ENCODE measurements at regions of chr7 and their contacts with region 1.

Region 1: GRCh38 chr7:28020302-28020940 is 160.2 kb downstream of the JAZF1 start:
- DNase-seq: peak; percentile 53
- ATAC-seq: peak; percentile 80
- H3K4me3 Mint-ChIP-seq: no peak overlapping the region
- H3K27ac Mint-ChIP-seq: no peak overlapping the region
- H3K4me1 Mint-ChIP-seq: no peaks in the 10 kb centered on the region
- H3K27me3 Mint-ChIP-seq: no peaks in the 10 kb centered on the region

Region 2: GRCh38 chr7:27921081-27921836 is 99.2 kb before region 1 on chr7:
- CTCF ChIA-PET with region 1: interaction called, 18 read pairs
- POLR2A ChIA-PET with region 1: no interaction called
- DNase-seq: peak; percentile 52
- ATAC-seq: no peak
- H3K4me3 Mint-ChIP-seq: no peak overlapping the region
- H3K27ac Mint-ChIP-seq: no peak overlapping the region
- H3K4me1 Mint-ChIP-seq: peaks cover 6% of the 10 kb centered on the region
- H3K27me3 Mint-ChIP-seq: peaks cover 4% of the 10 kb centered on the region

Region 3: DNA sequence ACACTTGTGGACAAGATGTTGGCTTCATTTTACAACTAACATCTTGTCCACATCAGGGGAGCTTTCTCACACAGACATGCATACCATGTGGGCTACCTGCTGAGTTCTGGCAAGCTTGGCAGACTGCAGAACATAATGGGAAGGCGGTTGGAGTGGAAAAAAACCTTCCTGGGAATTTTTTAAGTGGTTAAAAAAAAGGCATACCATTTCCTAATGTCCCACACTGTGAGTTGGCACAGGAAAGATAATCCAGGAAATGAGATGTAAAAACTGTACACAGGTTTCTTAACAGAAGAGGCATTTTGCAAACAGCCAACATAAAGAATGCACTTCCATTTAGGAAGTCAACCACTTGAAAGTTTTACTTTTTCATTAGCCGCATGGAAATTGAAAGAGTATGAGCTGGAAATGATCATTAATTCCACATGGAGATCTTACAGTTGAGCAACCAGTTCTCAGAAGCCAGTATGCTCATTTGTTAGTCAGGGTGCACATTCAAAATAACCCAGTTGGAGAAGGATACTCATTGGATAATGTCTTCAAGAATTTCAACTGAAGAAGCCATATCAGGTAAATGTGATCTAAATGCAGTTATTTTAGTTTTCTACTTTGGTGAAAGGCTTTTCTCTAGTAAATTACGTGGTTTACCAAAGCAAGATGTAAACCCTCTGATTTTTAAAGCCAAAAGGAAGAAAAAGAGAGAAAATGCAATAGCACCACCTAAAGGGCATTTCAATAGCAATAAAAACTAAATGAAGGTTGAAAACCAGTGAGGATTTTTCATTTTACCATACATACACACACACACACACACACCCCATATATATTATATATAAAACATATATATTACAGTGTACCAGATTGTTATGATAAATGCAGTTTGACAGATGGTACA is 86.5 kb before region 1 on chr7:
- CTCF ChIA-PET with region 1: interaction called, 15 read pairs
- POLR2A ChIA-PET with region 1: no interaction called
- DNase-seq: no peak
- ATAC-seq: no peak
- H3K4me3 Mint-ChIP-seq: no peak overlapping the region
- H3K27ac Mint-ChIP-seq: no peak overlapping the region
- H3K4me1 Mint-ChIP-seq: peaks cover 2% of the 10 kb centered on the region
- H3K27me3 Mint-ChIP-seq: no peaks in the 10 kb centered on the region

Region 4: GRCh38 chr7:27952456-27953285 is 67.8 kb before region 1 on chr7:
- CTCF ChIA-PET with region 1: interaction called, 13 read pairs
- POLR2A ChIA-PET with region 1: no interaction called
- DNase-seq: no peak
- ATAC-seq: no peak
- H3K4me3 Mint-ChIP-seq: no peak overlapping the region
- H3K27ac Mint-ChIP-seq: no peak overlapping the region
- H3K4me1 Mint-ChIP-seq: peaks cover 14% of the 10 kb centered on the region
- H3K27me3 Mint-ChIP-seq: no peaks in the 10 kb centered on the region

Region 5: DNA sequence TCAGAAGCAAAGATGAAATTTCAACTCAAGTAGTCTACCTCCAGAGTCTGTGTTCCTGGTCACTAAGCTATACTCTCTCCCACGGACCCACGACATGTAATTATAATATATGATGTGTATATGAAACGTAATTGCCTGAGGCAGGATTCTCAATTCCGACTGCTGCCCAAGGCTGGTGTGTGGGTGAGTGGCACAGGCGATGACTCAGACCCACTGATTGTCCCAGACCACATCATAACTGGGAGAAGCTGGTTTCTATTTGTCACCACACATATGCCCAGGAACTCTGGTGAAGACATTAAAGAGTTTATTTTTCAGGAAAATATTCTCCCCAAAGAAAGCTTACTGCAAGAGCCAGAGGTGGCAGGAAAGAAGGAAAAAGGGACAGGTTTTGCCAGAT is 59.2 kb before region 1 on chr7:
- CTCF ChIA-PET with region 1: interaction called, 11 read pairs
- POLR2A ChIA-PET with region 1: no interaction called
- DNase-seq: no peak
- ATAC-seq: no peak
- H3K4me3 Mint-ChIP-seq: no peak overlapping the region
- H3K27ac Mint-ChIP-seq: no peak overlapping the region
- H3K4me1 Mint-ChIP-seq: no peaks in the 10 kb centered on the region
- H3K27me3 Mint-ChIP-seq: peaks cover 17% of the 10 kb centered on the region

Region 6: DNA sequence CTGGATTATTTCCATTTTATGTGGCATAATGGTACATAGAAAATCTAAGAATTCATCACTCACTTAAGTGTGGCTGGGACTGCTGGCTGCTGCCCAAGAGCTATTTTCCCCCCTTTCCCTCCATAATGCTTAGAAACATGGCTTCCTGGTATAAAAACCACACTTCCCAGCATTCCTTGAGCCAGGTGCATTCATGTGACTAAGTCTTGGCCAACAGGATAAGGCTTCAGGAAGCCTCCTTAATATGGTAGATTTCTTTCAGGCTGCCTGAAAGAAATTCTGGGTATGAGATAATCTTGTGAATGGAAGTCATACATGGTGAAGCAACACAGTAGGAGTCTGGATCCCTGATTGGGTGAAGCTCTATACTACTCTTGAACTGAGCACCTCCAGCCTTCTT is 17.8 kb before region 1 on chr7:
- CTCF ChIA-PET with region 1: interaction called, 19 read pairs
- POLR2A ChIA-PET with region 1: no interaction called
- DNase-seq: no peak
- ATAC-seq: no peak
- H3K4me3 Mint-ChIP-seq: no peak overlapping the region
- H3K27ac Mint-ChIP-seq: no peak overlapping the region
- H3K4me1 Mint-ChIP-seq: peaks cover 9% of the 10 kb centered on the region
- H3K27me3 Mint-ChIP-seq: no peaks in the 10 kb centered on the region

Region 7: GRCh38 chr7:28062197-28062991 is 42.0 kb after region 1 on chr7:
- CTCF ChIA-PET with region 1: interaction called, 12 read pairs
- POLR2A ChIA-PET with region 1: no interaction called
- DNase-seq: peak; percentile 62
- ATAC-seq: peak; percentile 63
- H3K4me3 Mint-ChIP-seq: no peak overlapping the region
- H3K27ac Mint-ChIP-seq: no peak overlapping the region
- H3K4me1 Mint-ChIP-seq: no peaks in the 10 kb centered on the region
- H3K27me3 Mint-ChIP-seq: peaks cover 14% of the 10 kb centered on the region